ENCODE measurements at regions of chr9 and their contacts with region 1.

Region 1: GRCh38 chr9:130226112-130226681 is 39.4 kb upstream of the HMCN2 start:
- DNase-seq: no peak
- H3K4me3 ChIP-seq: no peak overlapping the region
- H3K27ac ChIP-seq: no peak overlapping the region
- H3K27me3 ChIP-seq: no peaks in the 10 kb centered on the region
- CTCF ChIP-seq: no peak

Region 2: DNA sequence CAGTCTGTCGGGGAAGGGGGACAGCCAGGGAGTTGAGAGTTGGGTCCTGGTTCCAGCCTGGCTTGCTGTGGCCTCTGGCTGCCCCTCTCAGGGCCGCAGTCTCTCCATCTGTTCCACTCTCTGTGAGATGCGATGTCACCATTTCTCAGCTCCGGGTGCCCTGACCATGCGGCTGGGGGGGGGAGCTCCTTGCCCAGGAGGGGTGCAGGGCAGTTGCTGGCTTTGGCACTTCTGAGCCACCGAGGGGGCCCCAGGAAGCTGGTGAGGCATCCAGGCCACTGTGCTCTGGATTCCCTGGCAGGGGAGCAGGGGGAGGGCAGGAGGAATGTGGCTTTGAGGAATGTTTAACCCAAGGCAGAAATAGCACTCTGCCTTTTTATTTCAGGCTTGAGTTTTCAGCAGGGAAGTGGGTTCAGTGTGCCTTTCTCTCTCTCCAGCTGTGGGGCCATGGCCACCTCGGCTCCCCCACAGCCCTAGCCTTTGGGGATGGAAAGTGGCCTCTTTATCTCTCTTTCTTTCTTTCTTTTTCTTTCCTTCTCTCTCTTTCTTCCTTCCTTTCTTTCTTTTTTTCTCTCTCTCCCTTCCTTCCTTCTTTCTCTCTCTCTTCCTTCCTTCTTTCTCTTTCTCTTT is 42.9 kb before region 1 on chr9:
- intact Hi-C with region 1: loop called in 1 of 2 experiments (anchors 5 kb)
- DNase-seq: peak in 1 of 10 donors; percentile 53
- H3K4me3 ChIP-seq: peak overlapping the region in 5 of 59 donors; percentile 2 to 19 (median 13)
- H3K27ac ChIP-seq: peak overlapping the region in 53 of 59 donors; percentile 5 to 98 (median 69)
- H3K27me3 ChIP-seq: no peaks in the 10 kb centered on the region
- CTCF ChIP-seq: no peak

Region 3: DNA sequence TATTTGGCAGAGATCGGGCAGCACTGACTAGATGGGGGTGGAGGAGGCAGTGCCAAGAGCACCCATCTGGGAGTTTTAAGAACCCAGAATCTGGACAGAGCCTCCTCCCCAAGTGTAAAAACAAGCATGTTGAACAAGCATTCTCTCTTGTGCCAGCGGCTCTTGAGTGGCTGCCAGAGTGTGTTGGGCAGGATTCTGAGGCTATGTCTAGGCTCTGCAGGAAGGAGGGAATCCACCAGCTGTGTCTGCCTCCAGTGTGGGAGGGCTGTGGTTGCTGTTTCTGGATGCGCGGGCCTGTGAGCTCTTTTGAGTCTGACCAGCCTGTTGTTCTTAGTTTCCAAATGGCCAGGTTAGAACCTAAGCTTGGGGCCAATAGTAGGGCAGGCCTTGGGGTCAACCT is 79.2 kb after region 1 on chr9:
- intact Hi-C with region 1: no loop called
- DNase-seq: peak in 9 of 10 donors; percentile 9 to 78 (median 63)
- H3K4me3 ChIP-seq: no peak overlapping the region
- H3K27ac ChIP-seq: peak overlapping the region in 1 of 59 donors; percentile 7
- H3K27me3 ChIP-seq: peaks cover 0 to 4% (median 0%) of the 10 kb centered on the region in 45 donors
- CTCF ChIP-seq: no peak

Measured in dorsolateral prefrontal cortex (tissue), 120 donors.